ENCODE measurements at regions of chr10 and their contacts with region 1.

Region 1: DNA sequence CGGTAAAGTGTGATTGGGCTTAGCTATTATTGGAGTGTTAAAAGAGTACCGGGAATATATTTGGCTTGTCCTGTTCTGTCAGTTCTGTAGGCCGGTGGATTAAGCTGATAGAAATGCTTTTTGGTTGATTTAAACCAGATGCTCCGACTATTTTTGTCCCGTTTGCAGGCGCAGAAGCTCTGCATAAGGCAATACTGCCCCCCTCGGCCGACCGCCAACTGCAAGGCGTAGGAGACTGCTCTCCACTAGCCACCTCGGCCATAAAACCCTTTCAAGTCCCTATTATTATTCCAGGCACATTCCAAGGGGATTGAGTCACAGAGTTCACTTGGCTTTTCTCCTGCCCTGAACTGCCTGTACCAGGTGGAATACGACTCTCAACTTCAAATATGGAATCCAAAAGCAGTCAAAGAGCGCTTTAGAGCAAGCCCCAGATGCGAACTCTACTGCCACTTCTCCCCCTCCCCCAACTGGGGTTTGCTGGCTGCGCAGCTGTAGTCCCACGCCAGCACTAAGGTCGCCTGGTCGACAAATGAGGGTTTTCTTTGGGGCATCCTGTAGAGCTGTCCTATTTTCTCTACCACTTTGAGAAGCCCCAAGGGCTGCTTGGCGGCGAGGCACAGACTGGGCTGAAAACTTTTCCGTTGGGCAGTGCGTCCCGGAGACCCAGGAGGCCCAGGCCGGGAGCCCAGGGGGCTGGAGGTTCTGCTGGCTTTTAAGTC is 108.3 kb downstream of the REEP3 start:
- DNase-seq: peak; percentile 94
- H3K4me3 Mint-ChIP-seq: peak overlapping the region; percentile 94
- H3K27ac Mint-ChIP-seq: peak overlapping the region; percentile 94
- H3K4me1 Mint-ChIP-seq: peaks cover 38% of the 10 kb centered on the region
- H3K27me3 Mint-ChIP-seq: peaks cover 1% of the 10 kb centered on the region

Region 2: GRCh38 chr10:63217120-63217605 is 412.4 kb before region 1 on chr10:
- intact Hi-C with region 1: loop called (anchors 1 kb)
- DNase-seq: peak; percentile 75
- H3K4me3 Mint-ChIP-seq: peak overlapping the region; percentile 15
- H3K27ac Mint-ChIP-seq: no peak overlapping the region
- H3K4me1 Mint-ChIP-seq: peaks cover 46% of the 10 kb centered on the region
- H3K27me3 Mint-ChIP-seq: no peaks in the 10 kb centered on the region

Region 3: DNA sequence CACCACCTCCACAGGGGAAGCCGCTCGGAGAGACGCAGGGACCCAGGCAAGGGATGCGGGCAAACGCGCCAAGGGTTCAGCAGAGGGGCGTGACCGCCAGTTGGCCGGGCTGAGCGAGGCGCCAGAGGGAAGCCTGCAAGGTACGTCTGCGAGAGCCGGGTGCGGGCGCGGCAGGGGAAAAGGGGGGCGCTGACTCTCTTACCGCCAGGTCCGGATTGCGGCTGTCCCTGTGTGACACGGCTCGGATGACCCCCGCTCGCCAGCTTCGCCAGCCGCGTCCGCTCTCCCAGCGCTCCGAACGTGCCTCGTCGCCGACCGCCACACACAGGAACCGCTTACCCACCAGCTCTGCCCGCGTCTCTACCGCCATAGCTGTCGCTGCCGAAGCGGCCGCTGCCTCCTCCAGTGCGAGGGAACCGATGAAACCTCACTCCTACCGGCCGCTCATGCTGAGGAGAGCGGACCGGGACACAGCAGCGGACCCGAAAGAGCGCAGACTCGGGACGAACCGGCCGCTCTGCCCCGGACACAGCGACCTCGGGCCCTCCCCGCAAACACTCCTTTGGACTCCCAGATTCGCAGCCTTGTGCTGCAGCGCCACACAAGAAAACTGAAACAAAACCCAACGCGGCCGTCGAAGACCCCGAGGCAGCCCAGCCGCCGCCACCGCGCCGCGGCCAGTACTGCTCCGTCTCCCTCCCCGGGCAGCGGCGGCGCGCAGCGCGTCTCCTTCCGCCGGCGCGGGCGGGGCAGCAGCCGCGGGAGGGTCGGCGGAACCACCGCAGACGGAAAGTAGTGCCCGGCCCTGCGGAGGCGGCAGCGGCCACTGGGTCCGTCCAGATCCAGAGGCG is 164.0 kb before region 1 on chr10 and contains the start of gene JMJD1C:
- intact Hi-C with region 1: loop called (anchors 2 kb)
- DNase-seq: peak; percentile 88
- H3K4me3 Mint-ChIP-seq: peak within 1 kb of the TSS; percentile 93
- H3K27ac Mint-ChIP-seq: peak within 1 kb of the TSS; percentile 67
- H3K4me1 Mint-ChIP-seq: peaks cover 17% of the 10 kb centered on the region
- H3K27me3 Mint-ChIP-seq: peaks cover 24% of the 10 kb centered on the region
- total RNA-seq, gene JMJD1C: 41.7 and 42.0 TPM in 2 replicates

Region 4: DNA sequence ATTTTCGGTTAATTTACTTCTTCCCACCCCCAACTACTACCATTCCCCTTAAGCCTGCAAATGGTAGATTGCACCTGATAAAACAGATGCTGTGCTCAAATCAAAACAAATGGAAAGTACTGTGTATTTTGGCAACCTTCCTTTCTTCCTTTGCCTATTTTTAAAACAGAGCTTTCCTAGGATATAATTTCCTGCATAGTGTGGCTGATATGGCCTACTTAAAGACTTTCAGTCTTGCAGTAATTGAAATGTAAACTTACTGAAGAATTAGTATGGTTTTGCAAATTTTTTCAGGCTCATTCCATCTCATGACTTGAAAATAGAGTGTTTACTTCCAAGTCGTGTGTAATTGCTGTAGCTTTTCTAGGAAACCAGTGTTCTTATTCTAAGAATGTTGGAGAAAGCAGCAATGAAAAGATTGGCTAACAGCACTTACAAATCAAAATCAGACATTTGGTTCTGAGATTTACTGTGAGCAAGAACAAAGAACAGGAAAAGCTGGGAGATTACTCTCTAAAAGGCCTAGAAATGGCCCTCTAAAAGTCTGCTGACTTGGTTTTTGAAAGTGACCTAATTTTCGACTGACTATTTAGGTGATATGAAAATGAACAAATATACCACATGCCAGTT is 56.3 kb before region 1 on chr10:
- intact Hi-C with region 1: loop called (anchors 2 kb)
- DNase-seq: no peak
- H3K4me3 Mint-ChIP-seq: no peak overlapping the region
- H3K27ac Mint-ChIP-seq: peak overlapping the region; percentile 76
- H3K4me1 Mint-ChIP-seq: peaks cover 15% of the 10 kb centered on the region
- H3K27me3 Mint-ChIP-seq: no peaks in the 10 kb centered on the region

Region 5: GRCh38 chr10:63588436-63589167 is 40.9 kb before region 1 on chr10:
- intact Hi-C with region 1: no loop called
- DNase-seq: no peak
- H3K4me3 Mint-ChIP-seq: no peak overlapping the region
- H3K27ac Mint-ChIP-seq: no peak overlapping the region
- H3K4me1 Mint-ChIP-seq: peaks cover 2% of the 10 kb centered on the region
- H3K27me3 Mint-ChIP-seq: no peaks in the 10 kb centered on the region

Region 6: DNA sequence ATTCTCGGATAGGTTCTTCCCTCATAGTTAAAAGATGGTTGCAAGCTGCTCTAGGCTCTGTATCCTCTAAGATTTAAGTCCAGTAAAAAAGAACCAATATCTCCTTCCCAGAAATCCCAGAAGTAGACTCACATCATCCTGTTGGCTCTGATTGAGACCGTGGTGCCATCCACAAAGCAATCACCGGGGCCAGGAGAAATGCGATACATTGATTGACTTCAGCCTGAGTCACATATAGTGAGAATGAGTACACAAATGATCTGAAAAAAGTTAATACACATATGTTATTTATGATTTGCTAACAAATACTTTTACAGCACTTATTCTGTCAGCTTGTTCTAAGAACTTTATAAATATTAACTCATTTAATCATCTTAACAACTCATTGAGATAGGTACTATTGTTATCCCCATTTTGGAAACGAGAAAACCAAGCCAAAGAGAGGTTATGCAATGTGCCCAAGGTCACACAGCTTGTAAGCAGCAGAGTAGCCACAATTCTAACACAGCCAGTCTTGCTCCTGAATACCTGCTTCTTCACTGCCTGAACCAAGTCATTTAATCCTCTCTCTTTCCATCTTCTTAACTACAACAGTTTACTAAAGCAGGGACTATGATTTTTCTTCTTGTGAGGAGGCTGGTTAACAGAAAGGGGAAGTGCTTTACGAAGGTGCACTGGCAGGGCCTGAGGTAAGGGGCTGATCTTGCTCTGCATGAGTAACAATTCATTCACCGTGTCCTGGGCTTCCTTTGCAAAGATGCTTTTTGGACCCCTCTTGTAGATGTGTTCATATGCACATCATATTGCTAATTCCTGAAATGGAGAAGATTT is 68.6 kb after region 1 on chr10:
- intact Hi-C with region 1: no loop called
- DNase-seq: no peak
- H3K4me3 Mint-ChIP-seq: no peak overlapping the region
- H3K27ac Mint-ChIP-seq: no peak overlapping the region
- H3K4me1 Mint-ChIP-seq: peaks cover 7% of the 10 kb centered on the region
- H3K27me3 Mint-ChIP-seq: no peaks in the 10 kb centered on the region

Region 7: DNA sequence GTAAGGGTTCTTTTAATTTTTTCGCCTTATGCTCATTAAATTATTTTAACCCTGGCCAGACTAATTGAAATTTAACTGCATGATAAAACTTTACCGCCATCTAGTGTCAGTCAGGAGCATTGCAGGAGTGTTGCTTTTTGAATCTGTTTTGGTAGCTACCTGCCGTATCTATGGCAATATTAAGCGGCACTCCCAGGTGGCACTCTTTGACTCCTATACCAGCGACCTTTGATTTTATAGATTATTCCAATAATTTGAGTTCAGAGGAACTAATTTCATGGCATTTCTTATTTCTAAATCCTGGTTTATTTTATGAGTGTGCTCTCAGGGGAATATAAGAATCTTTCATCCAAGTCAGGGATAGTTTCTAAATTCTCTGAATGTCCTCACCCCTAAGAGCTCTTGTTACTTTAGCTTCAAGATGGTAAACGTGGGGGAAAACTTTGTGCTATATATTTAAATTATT is 90.6 kb after region 1 on chr10:
- intact Hi-C with region 1: loop called (anchors 2 kb)
- DNase-seq: peak; percentile 85
- H3K4me3 Mint-ChIP-seq: peak overlapping the region; percentile 60
- H3K27ac Mint-ChIP-seq: no peak overlapping the region
- H3K4me1 Mint-ChIP-seq: peaks cover 22% of the 10 kb centered on the region
- H3K27me3 Mint-ChIP-seq: peaks cover 8% of the 10 kb centered on the region